ENCODE measurements at regions of chr16 and their contacts with region 1.

Region 1: GRCh38 chr16:21638573-21638975 is 13.8 kb downstream of the IGSF6 start:
- DNase-seq: peak in 4 of 5 donors; percentile 25 to 41 (median 32)
- H3K4me3 ChIP-seq: no peak overlapping the region
- H3K4me3 Mint-ChIP-seq: peak overlapping the region in 7 of 8 donors; percentile 22 to 79 (median 59)
- H3K27ac ChIP-seq: no peak overlapping the region
- H3K27ac Mint-ChIP-seq: peak overlapping the region; percentile 10 to 92 (median 70)
- H3K4me1 ChIP-seq: peaks cover 38% of the 10 kb centered on the region
- H3K4me1 Mint-ChIP-seq: peaks cover 19 to 50% (median 37%) of the 10 kb centered on the region in 4 donors
- H3K27me3 ChIP-seq: no peaks in the 10 kb centered on the region
- H3K27me3 Mint-ChIP-seq: no peaks in the 10 kb centered on the region

Region 2: GRCh38 chr16:21584817-21585216 is 53.8 kb before region 1 on chr16:
- CTCF ChIA-PET with region 1: interaction called, 105 read pairs
- POLR2A ChIA-PET with region 1: interaction called, 21 read pairs
- intact Hi-C with region 1: loop called (anchors 1 kb)
- DNase-seq: no peak
- H3K4me3 ChIP-seq: no peak overlapping the region
- H3K4me3 Mint-ChIP-seq: no peak overlapping the region
- H3K27ac ChIP-seq: no peak overlapping the region
- H3K27ac Mint-ChIP-seq: no peak overlapping the region
- H3K4me1 ChIP-seq: no peaks in the 10 kb centered on the region
- H3K4me1 Mint-ChIP-seq: peaks cover 0 to 5% (median 2%) of the 10 kb centered on the region in 4 donors
- H3K27me3 ChIP-seq: no peaks in the 10 kb centered on the region
- H3K27me3 Mint-ChIP-seq: peaks cover 0 to 1% of the 10 kb centered on the region in 2 donors

Region 3: GRCh38 chr16:21599233-21600030 is 39.1 kb before region 1 on chr16 and contains the start of gene METTL9:
- CTCF ChIA-PET with region 1: interaction called, 8 read pairs
- POLR2A ChIA-PET with region 1: interaction called, 14 read pairs
- intact Hi-C with region 1: no loop called
- DNase-seq: peak; percentile 94 to 96 (median 94)
- H3K4me3 ChIP-seq: peak within 1 kb of the TSS; percentile 65 to 80
- H3K4me3 Mint-ChIP-seq: peak within 1 kb of the TSS; percentile 90 to 97 (median 92)
- H3K27ac ChIP-seq: peak within 1 kb of the TSS; percentile 87
- H3K27ac Mint-ChIP-seq: peak within 1 kb of the TSS; percentile 82 to 99 (median 95)
- H3K4me1 ChIP-seq: peaks cover 57% of the 10 kb centered on the region
- H3K4me1 Mint-ChIP-seq: peaks cover 27 to 66% (median 49%) of the 10 kb centered on the region in 4 donors
- H3K27me3 ChIP-seq: no peaks in the 10 kb centered on the region
- H3K27me3 Mint-ChIP-seq: no peaks in the 10 kb centered on the region
- total RNA-seq, gene METTL9: 71.1 to 92.8 TPM

Region 4: DNA sequence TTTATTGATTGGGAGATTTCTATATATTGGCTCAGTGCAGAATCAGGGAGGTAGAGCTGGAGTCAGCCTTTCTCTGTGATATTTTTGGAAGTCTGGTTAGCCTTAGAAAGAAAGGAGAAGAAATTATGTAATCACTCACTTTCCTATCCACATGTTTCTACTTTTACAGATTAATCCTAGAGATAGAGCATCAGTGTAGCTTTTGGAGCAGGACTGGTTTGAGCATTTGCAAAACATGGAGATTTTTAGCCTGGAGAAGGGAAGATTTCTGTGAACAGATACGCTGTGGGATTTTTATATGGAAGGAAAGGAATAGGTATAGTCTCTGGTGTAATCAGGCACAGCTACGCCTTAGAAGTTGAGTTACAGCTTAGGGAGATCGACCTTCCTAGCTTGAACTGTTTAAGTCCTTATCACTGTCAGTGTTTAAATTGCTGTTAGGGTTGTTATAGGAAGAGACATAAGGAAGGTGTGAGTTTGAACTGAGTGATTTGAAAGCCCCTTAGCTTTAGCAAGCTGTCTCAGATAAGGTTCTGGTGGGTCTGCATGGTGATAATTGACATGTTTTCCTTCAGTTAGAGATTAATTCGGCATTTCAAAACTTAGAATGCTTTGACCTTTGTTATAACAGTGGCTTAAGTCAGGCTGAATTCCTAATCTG is 18.7 kb before region 1 on chr16:
- CTCF ChIA-PET with region 1: interaction called, 15 read pairs
- POLR2A ChIA-PET with region 1: interaction called, 14 read pairs
- intact Hi-C with region 1: no loop called
- DNase-seq: no peak
- H3K4me3 ChIP-seq: no peak overlapping the region
- H3K4me3 Mint-ChIP-seq: peak overlapping the region in 2 of 8 donors; percentile 4 to 49
- H3K27ac ChIP-seq: no peak overlapping the region
- H3K27ac Mint-ChIP-seq: peak overlapping the region in 6 of 7 donors; percentile 1 to 84 (median 66)
- H3K4me1 ChIP-seq: peaks cover 33% of the 10 kb centered on the region
- H3K4me1 Mint-ChIP-seq: peaks cover 32 to 81% (median 56%) of the 10 kb centered on the region in 4 donors
- H3K27me3 ChIP-seq: no peaks in the 10 kb centered on the region
- H3K27me3 Mint-ChIP-seq: no peaks in the 10 kb centered on the region

Region 5: DNA sequence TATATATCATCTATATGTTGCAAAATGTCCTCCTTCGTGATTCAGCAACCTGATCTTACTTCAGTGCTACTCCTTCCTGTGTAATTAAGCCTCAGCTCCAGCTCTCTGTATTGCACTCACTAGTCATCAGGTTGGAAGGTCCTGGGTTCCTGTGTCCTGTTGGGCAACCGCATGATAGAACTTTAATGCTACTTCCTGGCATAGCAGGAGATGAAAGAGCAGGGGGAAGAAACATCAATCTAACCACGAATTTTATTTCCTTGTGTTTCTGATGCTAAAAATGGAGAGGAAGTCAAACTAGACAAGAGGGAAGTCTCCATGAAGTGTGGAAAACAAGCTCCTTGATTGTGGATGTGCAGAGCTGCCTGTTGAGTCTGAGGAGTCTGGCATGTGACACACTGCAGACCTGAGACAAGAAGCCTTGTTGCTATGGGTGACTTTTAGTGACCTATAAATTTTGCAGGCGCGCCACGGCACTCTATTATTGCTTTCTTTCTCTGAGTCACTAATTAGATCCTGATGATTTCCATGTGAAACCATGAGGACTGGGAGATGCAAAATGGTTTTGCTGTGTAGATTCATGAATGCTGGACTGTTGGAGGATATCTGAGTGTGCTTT is 11.8 kb before region 1 on chr16:
- CTCF ChIA-PET with region 1: interaction called, 15 read pairs
- POLR2A ChIA-PET with region 1: interaction called, 14 read pairs
- intact Hi-C with region 1: no loop called
- DNase-seq: peak; percentile 24 to 62 (median 37)
- H3K4me3 ChIP-seq: no peak overlapping the region
- H3K4me3 Mint-ChIP-seq: peak overlapping the region; percentile 41 to 76 (median 66)
- H3K27ac ChIP-seq: peak overlapping the region; percentile 10
- H3K27ac Mint-ChIP-seq: peak overlapping the region; percentile 60 to 89 (median 81)
- H3K4me1 ChIP-seq: peaks cover 28% of the 10 kb centered on the region
- H3K4me1 Mint-ChIP-seq: peaks cover 28 to 62% (median 42%) of the 10 kb centered on the region in 4 donors
- H3K27me3 ChIP-seq: no peaks in the 10 kb centered on the region
- H3K27me3 Mint-ChIP-seq: no peaks in the 10 kb centered on the region

Region 6: DNA sequence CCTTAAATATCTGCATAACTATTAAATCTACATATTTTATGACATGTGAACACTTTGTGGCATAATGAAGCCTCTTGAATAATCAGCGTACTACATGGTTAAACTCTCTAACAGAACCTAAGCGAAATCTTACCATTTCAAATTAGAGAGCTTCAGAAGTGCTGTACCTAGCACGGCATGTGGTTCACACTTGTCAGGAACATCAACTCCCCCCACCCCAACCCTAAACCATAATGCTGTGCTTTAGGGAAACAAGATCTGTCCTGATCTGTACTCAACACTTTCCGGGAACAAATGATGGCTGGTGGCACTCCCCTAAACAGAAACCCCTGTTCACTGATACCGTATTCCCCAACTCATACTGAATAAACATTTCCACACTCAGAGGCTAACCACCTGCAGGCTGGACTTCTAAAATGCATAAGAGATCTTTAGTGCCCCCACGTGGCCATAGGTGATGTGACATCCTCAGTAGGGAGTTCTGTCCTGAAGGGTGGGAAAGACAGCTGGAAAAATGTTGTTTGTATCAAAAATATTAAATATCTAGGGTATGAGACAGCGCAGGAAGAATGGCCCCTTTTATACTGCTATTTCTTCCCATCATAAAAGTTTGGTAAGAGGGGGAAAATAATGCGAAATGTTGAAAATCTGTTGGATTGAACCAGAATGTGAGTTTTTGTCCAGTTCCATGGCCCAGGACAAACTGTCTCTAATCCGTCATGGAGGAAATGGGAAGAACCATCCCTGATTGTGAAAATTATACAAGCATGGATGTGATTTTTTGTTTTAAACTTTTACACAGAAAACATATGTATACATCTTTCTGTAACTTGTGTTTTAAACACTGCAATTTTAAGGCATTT is 1422.1 kb after region 1 on chr16:
- CTCF ChIA-PET with region 1: no interaction called
- POLR2A ChIA-PET with region 1: no interaction called
- intact Hi-C with region 1: loop called (anchors 2 kb)
- DNase-seq: peak; percentile 38 to 47 (median 39)
- H3K4me3 ChIP-seq: no peak overlapping the region
- H3K4me3 Mint-ChIP-seq: no peak overlapping the region
- H3K27ac ChIP-seq: no peak overlapping the region
- H3K27ac Mint-ChIP-seq: no peak overlapping the region
- H3K4me1 ChIP-seq: no peaks in the 10 kb centered on the region
- H3K4me1 Mint-ChIP-seq: peaks cover 0 to 4% (median 1%) of the 10 kb centered on the region in 4 donors
- H3K27me3 ChIP-seq: no peaks in the 10 kb centered on the region
- H3K27me3 Mint-ChIP-seq: peaks cover 9 to 17% of the 10 kb centered on the region in 2 donors